Natural killer cell (primary cell): ENCODE measurements at regions of chr9 and their contacts with region 1.

Region 1: GRCh38 chr9:127423934-127424675 is at the start of gene ZNF79:
- DNase-seq: peak; percentile 90 to 94
- ATAC-seq: peak; percentile 90 to 94 (median 93)
- H3K4me3 ChIP-seq: peak within 1 kb of the TSS; percentile 76
- H3K4me3 Mint-ChIP-seq: peak within 1 kb of the TSS; percentile 99
- H3K27ac ChIP-seq: peak within 1 kb of the TSS; percentile 62
- H3K27ac Mint-ChIP-seq: peak within 1 kb of the TSS; percentile 95 to 99
- H3K4me1 ChIP-seq: peaks cover 27% of the 10 kb centered on the region
- H3K4me1 Mint-ChIP-seq: peaks cover 37 to 51% of the 10 kb centered on the region in 2 donors
- H3K27me3 ChIP-seq: no peaks in the 10 kb centered on the region
- H3K27me3 Mint-ChIP-seq: no peaks in the 10 kb centered on the region
- CTCF ChIP-seq: no peak
- total RNA-seq, gene ZNF79: 13.8 to 16.1 (median 14.2) TPM

Region 2: DNA sequence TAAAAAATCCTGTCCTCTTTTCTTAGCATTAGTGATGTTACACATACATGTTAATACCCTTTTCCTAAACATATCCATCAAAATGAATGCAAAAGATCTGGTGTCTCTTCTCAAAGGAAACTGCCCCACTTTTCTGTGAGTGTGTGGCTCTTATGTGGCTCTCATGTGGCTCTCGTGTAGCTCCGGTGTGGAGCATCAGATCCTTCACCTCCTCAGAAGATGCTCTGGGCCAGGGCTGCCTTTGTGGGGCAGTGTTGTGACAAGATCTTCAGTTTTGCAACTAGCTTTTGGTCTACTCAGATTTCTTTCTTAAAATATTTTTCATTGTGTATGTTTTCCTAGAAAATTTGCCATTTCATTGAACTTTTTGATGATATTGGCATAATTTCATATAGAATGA is 140.2 kb before region 1 on chr9:
- intact Hi-C with region 1: loop called (anchors 10 kb)
- DNase-seq: peak in 1 of 2 donors; percentile 52
- ATAC-seq: no peak
- H3K4me3 ChIP-seq: no peak overlapping the region
- H3K4me3 Mint-ChIP-seq: no peak overlapping the region
- H3K27ac ChIP-seq: no peak overlapping the region
- H3K27ac Mint-ChIP-seq: no peak overlapping the region
- H3K4me1 ChIP-seq: no peaks in the 10 kb centered on the region
- H3K4me1 Mint-ChIP-seq: no peaks in the 10 kb centered on the region
- H3K27me3 ChIP-seq: no peaks in the 10 kb centered on the region
- H3K27me3 Mint-ChIP-seq: peaks cover 27 to 37% of the 10 kb centered on the region in 2 donors
- CTCF ChIP-seq: no peak

Region 3: DNA sequence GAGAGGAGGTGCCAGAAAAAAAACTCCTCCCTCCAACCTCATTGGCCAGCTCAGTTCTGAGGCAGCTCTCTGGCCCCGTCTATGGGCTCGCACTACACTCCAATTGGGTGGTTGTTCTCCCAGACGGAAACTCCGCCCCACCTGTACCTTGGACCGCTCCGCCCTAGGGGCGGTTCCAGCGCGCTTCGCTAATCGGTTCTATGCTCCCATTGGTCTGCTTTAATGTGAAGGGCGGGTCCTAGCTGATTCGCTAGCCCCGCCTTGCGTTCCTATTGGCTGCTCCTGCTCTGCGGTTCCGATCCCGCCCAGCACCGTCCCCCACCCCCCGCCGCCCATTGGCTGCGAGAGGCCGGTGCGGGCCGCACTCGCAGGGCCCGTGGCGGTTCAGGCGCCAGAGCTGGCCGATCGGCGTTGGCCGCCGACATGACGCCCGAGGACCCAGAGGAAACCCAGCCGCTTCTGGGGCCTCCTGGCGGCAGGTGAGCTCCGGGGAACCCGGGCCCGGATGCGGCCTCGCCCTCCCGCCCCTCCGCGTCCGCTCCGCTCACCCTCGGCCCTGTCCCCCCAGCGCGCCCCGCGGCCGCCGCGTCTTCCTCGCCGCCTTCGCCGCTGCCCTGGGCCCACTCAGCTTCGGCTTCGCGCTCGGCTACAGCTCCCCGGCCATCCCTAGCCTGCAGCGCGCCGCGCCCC is 27.2 kb before region 1 on chr9 and contains the start of gene SLC2A8:
- intact Hi-C with region 1: loop called (anchors 2 kb)
- DNase-seq: peak; percentile 96 to 97
- ATAC-seq: peak; percentile 90 to 98 (median 92)
- H3K4me3 ChIP-seq: peak within 1 kb of the TSS; percentile 43
- H3K4me3 Mint-ChIP-seq: peak within 1 kb of the TSS; percentile 83
- H3K27ac ChIP-seq: no peak within 1 kb of the TSS
- H3K27ac Mint-ChIP-seq: peak within 1 kb of the TSS; percentile 57 to 84
- H3K4me1 ChIP-seq: peaks cover 23% of the 10 kb centered on the region
- H3K4me1 Mint-ChIP-seq: peaks cover 9 to 13% of the 10 kb centered on the region in 2 donors
- H3K27me3 ChIP-seq: peaks cover 14% of the 10 kb centered on the region
- H3K27me3 Mint-ChIP-seq: peaks cover 11 to 14% of the 10 kb centered on the region in 2 donors
- CTCF ChIP-seq: no peak
- total RNA-seq, gene SLC2A8: 21.1 to 30.6 (median 30.0) TPM

Region 4: GRCh38 chr9:127450830-127451724 is 27.0 kb after region 1 on chr9 and contains the starts of genes LRSAM1 and RPL12:
- intact Hi-C with region 1: loop called (anchors 1 kb)
- DNase-seq: peak; percentile 99 to 100
- ATAC-seq: peak; percentile 83 to 91 (median 85)
- H3K4me3 ChIP-seq: peak within 1 kb of the TSS; percentile 88
- H3K4me3 Mint-ChIP-seq: peak within 1 kb of the TSS; percentile 96
- H3K27ac ChIP-seq: peak within 1 kb of the TSS; percentile 84
- H3K27ac Mint-ChIP-seq: peak within 1 kb of the TSS; percentile 93
- H3K4me1 ChIP-seq: peaks cover 32% of the 10 kb centered on the region
- H3K4me1 Mint-ChIP-seq: peaks cover 46 to 55% of the 10 kb centered on the region in 2 donors
- H3K27me3 ChIP-seq: no peaks in the 10 kb centered on the region
- H3K27me3 Mint-ChIP-seq: no peaks in the 10 kb centered on the region
- CTCF ChIP-seq: no peak
- total RNA-seq, gene LRSAM1: 17.4 to 24.6 (median 20.7) TPM
- total RNA-seq, gene RPL12: 561 to 770 (median 724) TPM

Region 5: GRCh38 chr9:127473501-127473900 is 49.4 kb after region 1 on chr9:
- intact Hi-C with region 1: no loop called
- DNase-seq: no peak
- ATAC-seq: no peak
- H3K4me3 ChIP-seq: no peak overlapping the region
- H3K4me3 Mint-ChIP-seq: no peak overlapping the region
- H3K27ac ChIP-seq: no peak overlapping the region
- H3K27ac Mint-ChIP-seq: no peak overlapping the region
- H3K4me1 ChIP-seq: no peaks in the 10 kb centered on the region
- H3K4me1 Mint-ChIP-seq: no peaks in the 10 kb centered on the region
- H3K27me3 ChIP-seq: no peaks in the 10 kb centered on the region
- H3K27me3 Mint-ChIP-seq: no peaks in the 10 kb centered on the region
- CTCF ChIP-seq: no peak